Body of pancreas (tissue), 4 donors: ENCODE measurements at regions of chr6 and their contacts with region 1.

Region 1: DNA sequence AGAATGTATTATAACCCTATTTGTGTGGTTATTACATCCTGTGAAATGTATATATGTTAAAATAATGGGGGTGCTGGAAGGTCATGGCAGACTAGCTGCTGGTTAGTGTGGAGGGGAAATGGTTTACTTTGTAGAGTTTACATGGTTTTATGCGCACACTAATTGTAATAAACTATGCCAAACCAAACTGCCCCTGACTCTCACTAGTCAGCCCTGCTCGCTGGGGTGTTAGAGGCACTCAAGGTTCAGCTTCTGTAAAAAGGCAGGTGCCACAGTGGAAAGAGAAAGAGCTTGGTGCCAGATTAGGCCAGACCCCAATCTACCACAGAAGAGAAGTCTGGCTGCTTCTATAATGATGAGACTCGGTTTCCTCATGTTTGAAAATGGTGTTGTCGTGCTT is 52.7 kb downstream of the GOPC start:
- DNase-seq: no peak
- ATAC-seq: no peak
- H3K4me3 ChIP-seq: no peak overlapping the region
- H3K27ac ChIP-seq: no peak overlapping the region
- H3K4me1 ChIP-seq: no peaks in the 10 kb centered on the region
- H3K27me3 ChIP-seq: no peaks in the 10 kb centered on the region
- CTCF ChIP-seq: no peak
- POLR2A ChIP-seq: no peak

Region 2: DNA sequence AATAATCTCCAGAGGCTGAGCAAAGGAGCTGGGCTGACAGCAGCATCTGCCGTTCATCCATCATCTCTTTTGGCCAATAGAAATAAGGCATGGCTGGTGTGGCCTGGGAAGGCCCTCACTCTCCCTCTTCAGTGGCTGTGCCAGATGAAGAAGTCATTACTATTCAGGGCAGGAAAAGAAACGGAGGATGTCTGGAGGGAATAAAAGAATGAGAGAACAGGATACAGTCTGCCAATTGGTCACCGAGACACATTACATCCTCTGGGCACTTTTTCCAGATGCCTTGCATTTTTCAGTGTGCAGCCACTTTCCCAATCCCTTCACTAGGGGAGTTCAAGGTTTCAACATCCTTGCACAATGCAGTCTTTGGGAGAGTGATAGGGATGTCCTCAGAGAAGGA is 316.5 kb before region 1 on chr6:
- intact Hi-C with region 1: no loop called
- DNase-seq: peak in 1 of 4 donors; percentile 11
- ATAC-seq: peak; percentile 48
- H3K4me3 ChIP-seq: no peak overlapping the region
- H3K27ac ChIP-seq: no peak overlapping the region
- H3K4me1 ChIP-seq: no peaks in the 10 kb centered on the region
- H3K27me3 ChIP-seq: no peaks in the 10 kb centered on the region
- CTCF ChIP-seq: no peak
- POLR2A ChIP-seq: no peak

Region 3: DNA sequence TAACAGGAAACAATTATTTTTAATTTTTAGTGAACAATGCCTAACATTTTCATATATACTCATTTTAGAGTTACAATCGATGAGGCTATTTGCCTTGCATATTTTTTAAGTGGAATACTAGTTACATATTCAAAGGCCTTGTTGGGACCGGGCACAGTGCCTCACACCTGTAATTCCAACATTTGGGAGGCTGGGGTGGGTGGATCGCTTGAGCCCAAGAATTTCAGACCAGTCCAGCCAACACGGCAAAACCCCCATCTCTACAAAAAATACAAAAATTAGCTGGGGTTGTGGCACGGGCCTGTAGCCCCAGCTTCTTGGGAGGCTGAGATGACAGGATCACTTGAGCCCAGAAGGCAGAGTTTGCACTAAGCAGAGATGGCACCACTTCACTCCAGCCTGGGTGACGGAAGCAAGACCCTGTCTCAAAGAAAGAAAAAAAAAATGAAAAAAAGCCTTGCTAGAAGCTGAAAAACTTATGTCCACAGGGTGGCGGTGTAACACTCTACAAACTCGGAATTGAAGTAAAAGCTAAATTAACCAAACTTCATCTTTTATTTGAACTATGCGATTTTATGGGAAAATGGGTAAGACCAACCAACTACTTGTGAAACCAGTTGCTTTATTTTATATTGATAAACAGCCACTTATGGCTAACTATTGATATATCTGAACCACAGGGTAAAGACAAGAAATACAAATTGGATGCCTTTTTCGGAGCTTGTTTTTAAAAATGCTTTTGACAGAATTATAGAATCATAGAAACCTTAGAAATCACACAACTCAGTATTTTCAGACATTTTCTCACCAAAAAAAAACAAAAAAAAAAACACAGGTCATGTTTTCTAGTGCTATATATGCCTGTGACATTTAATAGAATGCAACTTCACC is 99.8 kb before region 1 on chr6:
- intact Hi-C with region 1: loop called (anchors 5 kb)
- DNase-seq: peak; percentile 59 to 74 (median 70)
- ATAC-seq: peak; percentile 52
- H3K4me3 ChIP-seq: no peak overlapping the region
- H3K27ac ChIP-seq: no peak overlapping the region
- H3K4me1 ChIP-seq: no peaks in the 10 kb centered on the region
- H3K27me3 ChIP-seq: no peaks in the 10 kb centered on the region
- CTCF ChIP-seq: peak; percentile 44 to 89 (median 73)
- POLR2A ChIP-seq: no peak